Activated naive CD4-positive, alpha-beta T cell treated with anti-CD3 and anti-CD28 coated beads for 36 hours (primary cell): ENCODE measurements at regions of chr16 and their contacts with region 1.

Region 1: DNA sequence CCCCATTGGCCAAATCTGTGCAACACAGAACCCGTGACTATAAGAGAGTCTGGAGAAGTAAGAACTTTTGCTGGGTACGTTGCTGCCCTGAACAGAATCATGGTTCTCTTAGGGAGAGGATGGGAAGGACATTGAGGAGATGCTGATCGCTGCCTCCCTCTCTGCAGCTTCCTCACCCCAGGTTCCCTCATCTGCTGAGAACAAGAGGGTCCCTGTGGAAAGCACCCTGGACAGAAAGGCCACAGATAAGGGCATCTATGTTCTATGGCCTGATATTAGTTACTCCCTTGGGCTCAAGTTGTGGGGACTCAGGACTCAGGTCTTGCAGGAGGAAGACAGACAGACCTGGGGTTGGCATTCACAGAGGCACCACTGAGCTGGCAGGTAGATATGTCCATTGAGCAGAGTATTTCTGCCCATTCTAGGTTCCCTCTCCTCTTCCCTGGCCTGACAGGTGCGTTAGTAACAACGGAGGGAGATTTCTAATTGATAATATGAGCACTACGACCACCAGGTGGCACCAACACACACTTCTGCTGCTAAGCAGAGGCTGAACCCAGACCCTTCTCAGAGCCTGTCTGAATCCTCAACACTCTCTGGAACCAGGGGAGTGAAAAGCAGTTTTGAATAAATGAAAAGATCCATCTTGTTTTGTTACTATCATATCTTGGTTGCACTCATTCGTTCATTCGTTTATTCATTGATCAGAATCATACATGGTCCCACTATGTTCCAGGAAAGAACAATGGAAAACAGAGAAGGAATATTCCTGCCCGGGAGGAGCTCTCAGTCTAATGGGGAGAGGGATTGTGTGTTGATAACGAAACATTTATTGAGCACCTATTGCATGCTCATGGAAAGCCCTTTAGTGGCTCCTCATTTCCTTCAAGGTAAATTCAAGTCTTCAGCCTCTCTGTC is 56.4 kb downstream of the SLC6A2 start:
- DNase-seq: peak; percentile 74
- H3K4me3 Mint-ChIP-seq: no peak overlapping the region
- H3K27ac Mint-ChIP-seq: no peak overlapping the region
- H3K4me1 Mint-ChIP-seq: no peaks in the 10 kb centered on the region
- H3K27me3 Mint-ChIP-seq: peaks cover 10% of the 10 kb centered on the region

Region 2: GRCh38 chr16:55585631-55586030 is 126.6 kb before region 1 on chr16:
- CTCF ChIA-PET with region 1: no interaction called
- intact Hi-C with region 1: no loop called
- DNase-seq: no peak
- H3K4me3 Mint-ChIP-seq: no peak overlapping the region
- H3K27ac Mint-ChIP-seq: no peak overlapping the region
- H3K4me1 Mint-ChIP-seq: no peaks in the 10 kb centered on the region
- H3K27me3 Mint-ChIP-seq: peaks cover 5% of the 10 kb centered on the region

Region 3: GRCh38 chr16:55842369-55843104 is 130.3 kb after region 1 on chr16:
- CTCF ChIA-PET with region 1: interaction called, 30 read pairs
- intact Hi-C with region 1: loop called (anchors 1 kb)
- DNase-seq: peak; percentile 22
- H3K4me3 Mint-ChIP-seq: no peak overlapping the region
- H3K27ac Mint-ChIP-seq: no peak overlapping the region
- H3K4me1 Mint-ChIP-seq: no peaks in the 10 kb centered on the region
- H3K27me3 Mint-ChIP-seq: peaks cover 20% of the 10 kb centered on the region